IMR-90 (cell line): ENCODE measurements at regions of chr6 and their contacts with region 1.

Region 1: GRCh38 chr6:27157459-27158315 is 89.8 kb upstream of the PRSS16 start:
- DNase-seq: peak; percentile 77
- ATAC-seq: peak; percentile 86
- H3K4me3 ChIP-seq: peak overlapping the region; percentile 49
- H3K27ac ChIP-seq: no peak overlapping the region
- H3K4me1 ChIP-seq: no peaks in the 10 kb centered on the region
- H3K27me3 ChIP-seq: no peaks in the 10 kb centered on the region
- CTCF ChIP-seq: peak; percentile 50
- POLR2A ChIP-seq: no peak
- RAD21 ChIP-seq: peak; percentile 38

Region 2: GRCh38 chr6:27126815-27127537 is 30.7 kb before region 1 on chr6:
- CTCF ChIA-PET with region 1: no interaction called
- POLR2A ChIA-PET with region 1: no interaction called
- dilution Hi-C with region 1: no loop called
- in situ Hi-C with region 1: no loop called
- intact Hi-C with region 1: loop called (anchors 1 kb)
- DNase-seq: peak; percentile 90
- ATAC-seq: peak; percentile 93
- H3K4me3 ChIP-seq: peak overlapping the region; percentile 32; the same call in 1 of the 2 replicates
- H3K27ac ChIP-seq: peak overlapping the region; percentile 36
- H3K4me1 ChIP-seq: peaks cover 2% of the 10 kb centered on the region; the same call in 1 of the 2 replicates
- H3K27me3 ChIP-seq: no peaks in the 10 kb centered on the region
- CTCF ChIP-seq: peak; percentile 98
- POLR2A ChIP-seq: 0 out of 2 replicates have a peak, but pooled peaks have one; percentile 20
- RAD21 ChIP-seq: peak; percentile 81

Region 3: DNA sequence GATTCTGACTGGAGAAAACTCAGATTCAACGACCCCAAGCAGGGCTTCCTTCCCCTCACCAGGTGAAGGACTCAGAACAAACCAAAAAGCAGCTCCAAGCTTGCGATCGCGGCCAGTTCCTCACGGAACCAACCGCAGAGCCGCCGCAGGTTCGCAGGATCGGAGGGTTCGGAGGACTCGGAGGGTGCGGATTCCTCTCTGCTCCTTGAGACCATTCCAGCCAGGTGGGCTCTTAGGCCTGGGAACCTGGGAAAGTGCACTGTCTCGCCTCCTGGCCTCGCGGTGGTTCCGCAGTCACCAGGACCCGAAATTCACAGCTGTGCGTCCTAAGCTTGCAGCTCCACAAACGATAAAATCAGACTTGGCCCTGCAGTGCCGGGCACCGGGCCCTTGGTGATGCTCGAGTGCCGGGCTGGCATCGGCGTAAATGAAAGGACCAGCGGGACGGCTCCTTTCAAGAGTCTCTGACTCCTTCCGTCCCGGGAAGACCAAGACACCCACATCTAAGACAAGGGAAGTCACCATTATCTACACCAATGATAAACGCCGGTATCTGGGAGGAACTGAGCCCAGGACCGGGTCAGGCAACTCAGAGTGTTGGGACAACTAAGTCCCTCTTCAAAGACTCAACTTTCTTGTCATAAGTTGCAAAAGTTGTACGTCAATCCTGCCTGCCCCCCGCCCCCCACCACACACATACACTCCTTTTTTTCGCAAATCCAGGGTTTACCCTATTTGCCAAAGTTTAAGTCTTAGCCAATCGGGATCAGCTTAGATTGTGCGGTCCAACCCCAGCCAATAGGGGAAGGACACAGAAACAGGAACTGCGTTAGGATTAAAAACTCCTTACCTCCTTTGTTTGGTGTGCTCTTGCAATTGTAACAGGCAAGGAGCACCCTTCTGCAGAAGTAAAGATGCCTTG is 20.1 kb after region 1 on chr6:
- CTCF ChIA-PET with region 1: interaction called, 3 read pairs
- POLR2A ChIA-PET with region 1: interaction called, 16 read pairs
- dilution Hi-C with region 1: no loop called
- in situ Hi-C with region 1: no loop called
- intact Hi-C with region 1: no loop called
- DNase-seq: peak; percentile 94
- ATAC-seq: peak; percentile 92
- H3K4me3 ChIP-seq: peak overlapping the region; percentile 95
- H3K27ac ChIP-seq: peak overlapping the region; percentile 91
- H3K4me1 ChIP-seq: 0 out of 2 replicates have a peak, but pooled peaks cover 1% of the 10 kb centered on the region
- H3K27me3 ChIP-seq: no peaks in the 10 kb centered on the region
- CTCF ChIP-seq: peak; percentile 59
- POLR2A ChIP-seq: peak; percentile 73; the same call in 1 of the 2 replicates
- RAD21 ChIP-seq: peak; percentile 55

Region 4: DNA sequence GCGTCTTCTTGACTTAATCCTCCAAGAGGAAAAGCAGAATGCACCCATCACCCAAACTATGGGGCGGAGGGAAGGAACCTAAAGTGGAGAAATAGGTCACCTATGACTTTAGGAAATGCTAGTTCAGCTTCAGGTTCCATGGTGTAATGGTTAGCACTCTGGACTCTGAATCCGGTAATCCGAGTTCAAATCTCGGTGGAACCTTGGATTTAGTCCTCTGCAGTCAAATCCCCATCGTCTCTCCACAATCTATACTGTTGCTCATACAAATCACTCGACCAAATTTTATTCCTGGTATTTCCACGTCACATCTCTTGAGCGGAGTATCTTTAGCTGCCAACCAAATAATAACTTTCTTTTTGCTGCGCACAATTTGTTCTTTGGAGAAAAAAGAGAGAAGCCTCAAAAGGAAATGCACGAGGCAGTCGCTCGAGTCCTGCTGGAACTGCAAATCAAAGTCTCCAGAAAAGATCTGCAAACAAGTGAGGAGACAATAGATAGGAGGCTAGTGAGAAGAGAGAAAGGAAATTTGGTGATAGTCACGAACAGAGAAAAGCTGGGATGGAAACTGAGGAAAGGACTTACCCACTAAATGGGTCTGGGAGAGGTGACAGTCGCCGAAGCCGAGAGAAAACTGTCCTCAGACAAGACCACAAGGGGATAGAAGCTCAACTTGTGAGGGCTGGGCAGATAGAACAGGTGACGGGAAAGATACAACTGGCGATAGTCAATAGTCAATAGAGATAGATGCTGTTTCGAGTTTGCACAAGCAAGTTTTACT is 137.8 kb after region 1 on chr6:
- CTCF ChIA-PET with region 1: no interaction called
- POLR2A ChIA-PET with region 1: no interaction called
- dilution Hi-C with region 1: no loop called
- in situ Hi-C with region 1: no loop called
- intact Hi-C with region 1: loop called (anchors 5 kb)
- DNase-seq: peak; percentile 85
- ATAC-seq: peak; percentile 72
- H3K4me3 ChIP-seq: peak overlapping the region; percentile 48
- H3K27ac ChIP-seq: no peak overlapping the region
- H3K4me1 ChIP-seq: no peaks in the 10 kb centered on the region
- H3K27me3 ChIP-seq: peaks cover 9% of the 10 kb centered on the region
- CTCF ChIP-seq: no peak
- POLR2A ChIP-seq: no peak
- RAD21 ChIP-seq: no peak

Region 5: DNA sequence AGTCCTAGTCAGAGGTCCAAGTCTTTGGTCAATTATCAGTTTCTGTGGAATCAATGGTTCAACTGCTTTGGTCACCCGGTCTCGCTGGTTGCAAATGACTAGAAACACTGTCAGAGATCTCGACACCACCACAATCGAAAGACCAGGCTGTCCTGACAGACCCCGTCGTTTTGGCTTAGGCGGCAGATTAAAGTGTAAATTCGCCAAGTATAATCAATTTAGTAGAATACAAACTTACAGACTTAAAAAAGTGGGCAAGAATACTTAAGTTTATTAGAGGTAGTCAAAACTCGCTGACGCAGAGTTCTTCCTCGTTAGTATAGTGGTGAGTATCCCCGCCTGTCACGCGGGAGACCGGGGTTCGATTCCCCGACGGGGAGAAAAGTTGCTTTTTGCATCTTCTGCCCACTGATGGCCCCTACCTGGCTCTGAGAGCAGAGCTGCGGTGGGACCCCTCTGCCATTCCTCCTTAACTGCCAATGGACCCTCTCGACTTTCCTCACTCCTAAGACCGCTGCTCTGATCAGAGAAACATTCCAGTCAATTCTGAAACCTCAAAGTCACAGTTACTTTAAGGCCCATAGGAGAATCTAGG is 345.8 kb after region 1 on chr6:
- CTCF ChIA-PET with region 1: no interaction called
- POLR2A ChIA-PET with region 1: no interaction called
- dilution Hi-C with region 1: no loop called
- in situ Hi-C with region 1: no loop called
- intact Hi-C with region 1: loop called (anchors 2 kb)
- DNase-seq: peak; percentile 78
- ATAC-seq: peak; percentile 53
- H3K4me3 ChIP-seq: peak overlapping the region; percentile 74
- H3K27ac ChIP-seq: no peak overlapping the region
- H3K4me1 ChIP-seq: no peaks in the 10 kb centered on the region
- H3K27me3 ChIP-seq: no peaks in the 10 kb centered on the region
- CTCF ChIP-seq: no peak
- POLR2A ChIP-seq: no peak
- RAD21 ChIP-seq: no peak; the same call in 1 of the 2 replicates

Region 6: DNA sequence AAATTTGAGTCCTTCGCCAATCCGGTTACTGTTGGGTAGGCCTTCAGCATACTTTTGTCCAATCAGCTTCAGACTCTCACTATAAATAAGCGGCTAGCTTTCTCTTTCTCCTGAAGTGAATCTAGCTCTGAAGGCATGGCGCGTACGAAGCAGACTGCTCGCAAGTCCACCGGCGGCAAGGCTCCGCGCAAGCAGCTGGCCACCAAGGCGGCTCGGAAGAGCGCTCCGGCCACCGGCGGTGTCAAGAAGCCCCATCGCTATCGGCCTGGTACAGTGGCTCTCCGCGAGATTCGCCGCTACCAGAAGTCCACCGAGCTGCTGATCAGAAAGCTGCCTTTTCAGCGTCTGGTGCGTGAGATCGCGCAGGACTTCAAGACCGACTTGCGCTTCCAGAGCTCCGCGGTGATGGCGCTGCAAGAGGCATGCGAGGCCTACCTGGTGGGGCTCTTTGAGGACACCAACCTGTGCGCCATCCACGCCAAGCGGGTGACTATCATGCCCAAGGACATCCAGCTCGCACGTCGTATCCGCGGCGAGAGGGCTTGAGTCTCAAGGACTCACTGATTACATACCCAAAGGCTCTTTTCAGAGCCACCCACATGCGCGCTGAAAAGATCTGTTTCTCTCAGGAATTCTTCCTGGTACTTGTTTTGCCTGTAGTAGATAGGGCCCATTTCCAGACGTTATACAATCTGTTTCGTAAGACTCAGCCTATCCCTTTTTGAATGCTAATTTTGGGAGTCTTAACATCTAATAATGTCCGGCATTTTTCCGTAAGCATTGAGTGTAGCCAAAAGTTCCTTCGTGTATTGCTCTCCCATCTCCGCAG is 652.5 kb after region 1 on chr6:
- CTCF ChIA-PET with region 1: no interaction called
- POLR2A ChIA-PET with region 1: no interaction called
- dilution Hi-C with region 1: no loop called
- in situ Hi-C with region 1: loop called (anchors 10 kb)
- intact Hi-C with region 1: no loop called
- DNase-seq: peak; percentile 98
- ATAC-seq: peak; percentile 52
- H3K4me3 ChIP-seq: peak overlapping the region; percentile 58
- H3K27ac ChIP-seq: peak overlapping the region; percentile 87
- H3K4me1 ChIP-seq: peaks cover 3% of the 10 kb centered on the region
- H3K27me3 ChIP-seq: no peaks in the 10 kb centered on the region
- CTCF ChIP-seq: 0 out of 2 replicates have a peak, but pooled peaks have one; percentile 16
- POLR2A ChIP-seq: peak; percentile 99
- RAD21 ChIP-seq: no peak